Activated CD4-positive, alpha-beta T cell treated with anti-CD3 and anti-CD28 coated beads for 36 hours (primary cell): ENCODE measurements at regions of chr7 and their contacts with region 1.

Region 1: GRCh38 chr7:26376175-26376917 is 84.7 kb downstream of the SNX10 start:
- DNase-seq: peak; percentile 65
- ATAC-seq: peak; percentile 27
- H3K4me3 Mint-ChIP-seq: peak overlapping the region; percentile 70
- H3K27ac Mint-ChIP-seq: no peak overlapping the region
- H3K4me1 Mint-ChIP-seq: peaks cover 5% of the 10 kb centered on the region
- H3K27me3 Mint-ChIP-seq: peaks cover 22% of the 10 kb centered on the region

Region 2: DNA sequence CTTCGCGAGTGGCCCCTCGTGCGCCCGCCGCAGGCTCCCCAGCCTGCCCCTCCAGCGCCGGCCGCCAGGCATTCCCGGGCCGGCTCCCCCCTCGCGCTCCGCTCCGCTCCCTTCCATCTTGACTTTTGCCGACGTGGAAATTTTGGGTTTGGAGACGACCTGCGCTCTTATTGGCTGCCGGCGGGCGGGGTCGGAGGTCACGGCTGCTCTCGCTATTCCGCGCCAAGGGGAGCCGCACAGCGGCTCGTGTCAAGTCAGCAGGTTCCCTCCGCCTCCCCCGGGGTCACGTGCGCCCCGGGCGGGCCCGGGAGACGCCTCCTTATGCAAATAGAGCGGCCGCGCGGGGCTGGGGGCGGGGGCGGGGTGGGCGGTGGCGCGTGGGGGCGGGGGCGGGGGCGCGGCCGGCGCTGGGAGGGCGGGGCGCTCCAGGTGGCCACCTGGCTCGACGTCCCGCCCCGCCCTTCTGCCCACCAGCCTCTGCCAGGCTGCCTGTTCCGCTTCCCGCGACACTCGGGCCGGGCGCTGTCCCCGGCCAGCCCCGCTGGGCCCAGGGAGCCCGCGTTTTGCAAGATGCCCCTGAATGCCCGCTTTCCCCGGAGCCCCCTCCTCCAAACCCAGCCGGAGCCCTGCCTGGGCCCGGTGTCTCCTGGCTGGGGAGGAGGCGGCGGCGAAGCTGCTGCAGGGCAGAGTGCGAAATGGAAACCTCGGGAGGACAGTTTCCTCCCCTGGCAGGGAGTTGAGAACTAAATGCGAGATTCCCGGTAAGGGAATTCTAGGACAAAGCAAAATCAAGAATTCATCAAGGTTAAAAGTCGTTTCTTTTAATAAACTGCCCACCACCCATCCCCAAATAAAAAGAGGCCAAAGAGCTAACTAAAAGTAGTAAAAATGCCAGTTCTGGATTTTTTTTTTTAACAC is 425.1 kb before region 1 on chr7:
- CTCF ChIA-PET with region 1: interaction called, 3 read pairs
- POLR2A ChIA-PET with region 1: no interaction called
- intact Hi-C with region 1: loop called in 1 of 2 experiments (anchors 2 kb)
- DNase-seq: peak; percentile 94
- ATAC-seq: peak; percentile 99
- H3K4me3 Mint-ChIP-seq: peak overlapping the region; percentile 80
- H3K27ac Mint-ChIP-seq: peak overlapping the region; percentile 72
- H3K4me1 Mint-ChIP-seq: peaks cover 17% of the 10 kb centered on the region
- H3K27me3 Mint-ChIP-seq: no peaks in the 10 kb centered on the region

Region 3: GRCh38 chr7:26398756-26399501 is 22.6 kb after region 1 on chr7:
- CTCF ChIA-PET with region 1: interaction called, 5 read pairs
- POLR2A ChIA-PET with region 1: no interaction called
- intact Hi-C with region 1: loop called in 1 of 2 experiments (anchors 1 kb)
- DNase-seq: peak; percentile 66
- ATAC-seq: peak; percentile 49
- H3K4me3 Mint-ChIP-seq: peak overlapping the region; percentile 81
- H3K27ac Mint-ChIP-seq: peak overlapping the region; percentile 82
- H3K4me1 Mint-ChIP-seq: peaks cover 9% of the 10 kb centered on the region
- H3K27me3 Mint-ChIP-seq: peaks cover 40% of the 10 kb centered on the region

Region 4: GRCh38 chr7:26667500-26668133 is 291.3 kb after region 1 on chr7:
- CTCF ChIA-PET with region 1: interaction called, 8 read pairs
- POLR2A ChIA-PET with region 1: no interaction called
- intact Hi-C with region 1: loop called in 1 of 2 experiments (anchors 1 kb)
- DNase-seq: peak; percentile 68
- ATAC-seq: peak; percentile 61
- H3K4me3 Mint-ChIP-seq: no peak overlapping the region
- H3K27ac Mint-ChIP-seq: no peak overlapping the region
- H3K4me1 Mint-ChIP-seq: peaks cover 15% of the 10 kb centered on the region
- H3K27me3 Mint-ChIP-seq: peaks cover 11% of the 10 kb centered on the region

Region 5: GRCh38 chr7:26688936-26689506 is 312.7 kb after region 1 on chr7:
- CTCF ChIA-PET with region 1: no interaction called
- POLR2A ChIA-PET with region 1: no interaction called
- intact Hi-C with region 1: no loop called
- DNase-seq: no peak
- ATAC-seq: no peak
- H3K4me3 Mint-ChIP-seq: no peak overlapping the region
- H3K27ac Mint-ChIP-seq: no peak overlapping the region
- H3K4me1 Mint-ChIP-seq: no peaks in the 10 kb centered on the region
- H3K27me3 Mint-ChIP-seq: peaks cover 16% of the 10 kb centered on the region

Region 6: GRCh38 chr7:27095897-27096767 is 719.8 kb after region 1 on chr7 and contains the start of gene HOXA1:
- CTCF ChIA-PET with region 1: no interaction called
- POLR2A ChIA-PET with region 1: no interaction called
- intact Hi-C with region 1: loop called in 1 of 2 experiments (anchors 10 kb)
- DNase-seq: peak; percentile 85
- ATAC-seq: peak; percentile 91
- H3K4me3 Mint-ChIP-seq: peak within 1 kb of the TSS; percentile 70
- H3K27ac Mint-ChIP-seq: peak within 1 kb of the TSS; percentile 5
- H3K4me1 Mint-ChIP-seq: peaks cover 23% of the 10 kb centered on the region
- H3K27me3 Mint-ChIP-seq: peaks cover 84% of the 10 kb centered on the region
- total RNA-seq, gene HOXA1: 0.12 to 0.14 TPM